GM13977 (cell line): ENCODE measurements at regions of chr11 and their contacts with region 1.

Region 1: DNA sequence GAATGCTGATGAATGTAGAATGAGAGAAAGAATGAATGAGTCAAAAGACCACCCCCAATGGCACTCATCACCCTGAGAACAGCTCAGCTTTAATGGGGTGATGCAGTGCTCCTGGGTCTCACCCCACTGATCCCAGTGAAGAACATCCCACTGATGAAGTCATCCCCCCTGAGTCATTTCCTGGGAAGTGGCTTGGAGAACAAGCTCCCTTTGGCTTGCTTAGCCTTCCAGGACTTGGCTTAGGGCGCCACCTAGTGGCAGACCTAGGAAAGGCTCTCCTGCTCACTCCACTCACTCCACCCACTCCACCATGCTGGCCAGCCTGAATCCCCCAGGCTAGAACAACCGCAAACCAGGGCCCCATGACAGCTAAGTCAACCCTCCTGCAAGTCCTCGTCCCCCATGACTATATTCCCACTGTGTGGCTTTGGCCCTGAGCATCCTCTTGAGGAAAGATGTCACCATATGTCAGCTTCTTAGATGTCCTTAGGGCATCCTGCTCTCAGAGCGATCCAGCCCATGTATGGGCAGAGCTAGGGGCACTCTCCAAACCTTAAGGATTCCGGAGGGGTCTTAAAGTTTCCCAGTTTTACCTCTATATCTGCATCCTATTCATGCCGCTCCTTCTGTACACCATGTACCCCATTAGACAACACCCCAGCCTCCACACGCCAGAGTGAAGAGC is 17.8 kb upstream of the TMPRSS13 start:
- DNase-seq: peak; percentile 71
- CTCF ChIP-seq: peak; percentile 95

Region 2: DNA sequence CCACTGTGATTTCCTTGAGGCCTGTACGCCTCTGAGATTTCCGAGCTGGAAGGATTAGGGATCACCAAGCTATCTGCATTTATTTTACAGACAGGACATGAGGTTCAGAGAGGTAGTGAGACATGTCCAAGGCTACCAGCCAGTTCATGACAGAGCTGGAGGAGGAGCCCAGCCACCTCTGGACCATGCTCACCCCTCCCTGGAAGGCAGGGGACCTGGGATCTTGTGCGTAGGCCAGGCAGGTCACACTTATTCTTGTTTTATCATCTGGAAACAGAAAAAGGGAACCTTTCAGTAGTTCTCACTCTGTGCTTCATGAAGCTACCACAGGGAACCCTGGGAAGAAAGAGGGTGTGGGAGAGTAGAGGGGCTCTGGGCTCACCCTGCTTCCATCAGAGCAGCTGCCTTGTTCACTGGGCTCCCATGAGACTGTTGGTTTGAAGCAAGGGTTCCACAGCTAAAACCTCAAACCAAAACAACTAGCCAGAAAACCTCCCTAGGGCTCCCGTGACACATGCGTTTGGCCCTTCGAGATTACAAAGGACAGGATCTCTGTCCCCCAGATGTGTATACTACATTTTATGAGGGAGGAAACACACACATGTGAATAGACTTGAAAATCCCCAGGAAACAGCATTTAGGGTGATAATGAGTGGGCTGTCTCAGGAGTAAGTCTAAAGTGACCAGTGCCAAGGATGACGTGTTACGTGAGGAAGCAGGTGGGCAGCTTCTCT is 256.3 kb before region 1 on chr11:
- in situ Hi-C with region 1: no loop called
- DNase-seq: no peak
- CTCF ChIP-seq: no peak

Region 3: GRCh38 chr11:117781627-117782026 is 165.4 kb before region 1 on chr11:
- in situ Hi-C with region 1: no loop called
- DNase-seq: no peak
- CTCF ChIP-seq: no peak

Region 4: GRCh38 chr11:117851106-117851505 is 95.9 kb before region 1 on chr11:
- in situ Hi-C with region 1: loop called (anchors 10 kb)
- DNase-seq: no peak
- CTCF ChIP-seq: no peak

Region 5: DNA sequence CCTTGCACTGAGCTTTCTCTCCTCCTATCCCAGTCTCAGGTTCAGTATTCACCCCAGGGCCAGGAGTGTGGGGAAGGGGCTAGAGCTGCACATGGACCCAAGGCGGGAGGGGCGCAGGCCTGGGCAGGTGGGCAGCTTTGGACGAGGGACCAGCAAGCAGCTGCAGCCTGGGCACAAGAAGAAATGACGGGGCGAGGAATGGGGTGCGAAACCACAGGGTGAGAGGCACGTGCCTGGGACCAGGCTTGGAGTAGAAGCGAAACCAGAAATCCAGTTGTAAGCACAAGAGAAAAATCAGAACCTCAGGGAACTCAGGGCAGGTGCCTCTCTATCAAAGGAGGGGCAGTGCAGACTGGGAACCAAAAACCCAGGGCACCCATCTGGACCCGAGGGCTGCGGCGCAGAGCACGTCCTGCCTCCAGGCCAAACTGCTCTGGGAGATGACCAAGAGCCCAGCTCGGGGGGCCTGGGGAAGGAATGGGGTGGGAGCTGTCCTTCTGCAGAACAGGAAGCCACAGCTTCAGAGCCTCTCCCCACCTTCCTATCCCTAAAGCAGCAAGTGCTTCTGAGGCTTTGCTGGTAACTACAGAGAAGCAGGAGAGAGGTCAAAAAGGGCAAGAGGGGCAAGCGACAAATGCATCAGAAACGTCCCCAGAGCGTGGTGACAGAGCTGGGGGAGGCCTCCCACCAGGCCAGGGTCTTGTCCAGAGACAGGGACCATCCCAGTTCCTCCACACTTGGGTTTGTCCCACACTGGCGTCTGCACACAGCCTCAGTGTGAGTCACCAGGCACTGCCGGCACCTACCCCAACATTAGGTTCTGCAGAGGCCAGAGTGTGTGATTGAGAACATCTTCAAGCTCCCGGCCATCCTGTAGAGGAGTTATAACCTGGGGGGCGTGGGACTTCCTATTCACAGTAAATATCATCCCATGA is 111.6 kb after region 1 on chr11:
- in situ Hi-C with region 1: loop called (anchors 5 kb)
- DNase-seq: no peak
- CTCF ChIP-seq: no peak

Region 6: DNA sequence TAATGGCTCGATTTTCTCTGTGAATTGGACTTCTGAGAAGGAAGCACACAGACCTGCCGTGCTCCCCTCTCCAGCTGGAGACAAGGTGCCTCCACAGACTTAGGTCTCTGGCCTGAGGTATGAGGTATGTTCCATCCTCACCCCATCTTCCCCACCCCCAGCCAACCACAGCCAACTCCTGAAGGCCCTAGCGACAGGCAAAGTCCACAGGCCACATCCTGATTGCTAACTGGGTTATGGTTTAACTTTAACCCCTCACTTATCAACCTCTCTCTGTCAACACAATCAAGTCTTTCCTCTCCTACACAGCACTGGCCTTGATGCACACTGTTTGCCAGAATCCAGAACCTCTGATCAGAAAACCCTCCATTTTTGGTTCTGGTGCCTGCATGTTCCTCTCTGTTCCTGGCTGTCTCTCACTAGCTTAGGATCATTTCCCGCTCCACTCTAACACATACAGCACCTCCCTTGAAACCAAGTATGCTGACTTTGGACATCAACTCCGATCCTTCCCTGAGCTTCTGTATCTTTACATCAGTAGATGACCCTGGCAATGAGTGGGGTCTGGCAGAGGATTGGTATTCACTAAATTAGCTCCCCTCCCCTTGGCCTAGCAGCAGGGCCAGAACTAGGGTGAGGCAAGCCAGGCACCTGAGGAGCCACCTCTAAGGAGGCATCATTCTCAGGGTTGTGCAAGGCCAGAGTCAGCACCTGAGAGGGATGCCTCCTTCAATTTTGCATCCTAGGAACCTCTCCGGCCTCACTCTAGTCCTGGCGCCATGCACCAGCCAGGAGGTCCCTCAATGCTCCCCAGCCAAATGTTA is 255.8 kb after region 1 on chr11:
- in situ Hi-C with region 1: no loop called
- DNase-seq: no peak
- CTCF ChIP-seq: no peak